Activated naive CD4-positive, alpha-beta T cell treated with anti-CD3 and anti-CD28 coated beads for 36 hours (primary cell): ENCODE measurements at regions of chrX and their contacts with region 1.

Region 1: GRCh38 chrX:83845397-83845796 is 15.5 kb upstream of the CYLC1 start:
- DNase-seq: no peak
- H3K4me3 Mint-ChIP-seq: no peak overlapping the region
- H3K27ac Mint-ChIP-seq: no peak overlapping the region
- H3K4me1 Mint-ChIP-seq: no peaks in the 10 kb centered on the region
- H3K27me3 Mint-ChIP-seq: no peaks in the 10 kb centered on the region

Region 2: GRCh38 chrX:83333813-83334212 is 511.6 kb before region 1 on chrX:
- CTCF ChIA-PET with region 1: no interaction called
- intact Hi-C with region 1: no loop called
- DNase-seq: no peak
- H3K4me3 Mint-ChIP-seq: no peak overlapping the region
- H3K27ac Mint-ChIP-seq: no peak overlapping the region
- H3K4me1 Mint-ChIP-seq: no peaks in the 10 kb centered on the region
- H3K27me3 Mint-ChIP-seq: no peaks in the 10 kb centered on the region

Region 3: DNA sequence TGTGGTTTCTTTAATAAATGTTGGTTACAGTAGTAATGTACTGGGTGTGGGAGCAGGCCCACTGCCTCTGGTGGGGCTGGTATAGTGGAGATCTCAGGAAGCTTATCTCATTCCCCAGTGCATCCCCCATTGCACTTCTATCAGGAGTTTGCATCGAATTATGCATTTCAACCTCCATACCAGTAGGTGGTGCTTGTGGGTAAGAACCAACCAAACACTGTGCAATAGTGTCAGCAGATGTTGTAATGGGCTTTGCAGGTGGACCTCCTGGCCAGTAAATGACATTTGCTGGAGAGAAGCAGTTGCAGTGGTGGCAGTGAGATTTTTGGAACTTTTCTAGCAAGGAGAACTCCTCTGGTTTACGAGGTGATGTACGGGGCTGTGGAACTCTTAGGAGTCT is 186.7 kb before region 1 on chrX:
- CTCF ChIA-PET with region 1: no interaction called
- intact Hi-C with region 1: loop called (anchors 10 kb)
- DNase-seq: no peak
- H3K4me3 Mint-ChIP-seq: no peak overlapping the region
- H3K27ac Mint-ChIP-seq: no peak overlapping the region
- H3K4me1 Mint-ChIP-seq: no peaks in the 10 kb centered on the region
- H3K27me3 Mint-ChIP-seq: no peaks in the 10 kb centered on the region

Region 4: GRCh38 chrX:83888585-83888984 is 43.2 kb after region 1 on chrX:
- CTCF ChIA-PET with region 1: no interaction called
- intact Hi-C with region 1: no loop called
- DNase-seq: no peak
- H3K4me3 Mint-ChIP-seq: no peak overlapping the region
- H3K27ac Mint-ChIP-seq: no peak overlapping the region
- H3K4me1 Mint-ChIP-seq: no peaks in the 10 kb centered on the region
- H3K27me3 Mint-ChIP-seq: no peaks in the 10 kb centered on the region